Activated CD4-positive, alpha-beta T cell treated with anti-CD3 and anti-CD28 coated beads for 36 hours (primary cell): ENCODE measurements at regions of chr15 and their contacts with region 1.

Region 1: GRCh38 chr15:92077353-92078085 is 224.0 kb downstream of the SLCO3A1 start:
- DNase-seq: peak; percentile 86
- ATAC-seq: peak; percentile 87
- H3K4me3 Mint-ChIP-seq: no peak overlapping the region
- H3K27ac Mint-ChIP-seq: no peak overlapping the region
- H3K4me1 Mint-ChIP-seq: peaks cover 23% of the 10 kb centered on the region
- H3K27me3 Mint-ChIP-seq: no peaks in the 10 kb centered on the region

Region 2: DNA sequence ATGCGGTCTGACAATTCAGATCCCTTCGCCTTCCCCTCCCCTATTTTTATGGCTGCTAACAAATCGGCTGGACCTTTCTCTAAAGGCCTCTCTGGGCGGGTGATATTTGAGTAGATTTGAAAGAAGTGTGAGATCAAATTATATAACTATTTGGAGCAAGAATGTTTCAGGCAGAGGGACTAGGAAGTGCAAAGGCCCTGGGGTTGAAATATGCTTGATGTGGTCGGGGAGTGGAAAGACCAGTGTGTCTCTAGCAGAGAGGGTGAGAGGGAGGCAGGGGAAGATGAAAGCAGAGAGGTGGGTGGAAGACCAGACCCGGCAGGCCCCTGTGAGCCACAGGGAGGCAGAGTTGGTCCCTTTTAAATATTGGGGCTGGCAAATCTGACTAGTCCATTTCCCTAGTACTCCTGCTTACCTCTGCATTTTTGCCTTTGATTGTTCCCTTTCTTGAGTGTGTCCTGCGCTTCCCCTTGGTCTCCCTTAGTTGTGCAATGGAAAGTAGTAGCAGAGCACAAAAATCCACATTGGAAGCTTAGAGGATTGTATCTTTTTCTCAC is 191.7 kb before region 1 on chr15:
- CTCF ChIA-PET with region 1: interaction called, 6 read pairs
- POLR2A ChIA-PET with region 1: no interaction called
- intact Hi-C with region 1: loop called in 1 of 2 experiments (anchors 1 kb)
- DNase-seq: peak; percentile 19
- ATAC-seq: no peak
- H3K4me3 Mint-ChIP-seq: no peak overlapping the region
- H3K27ac Mint-ChIP-seq: no peak overlapping the region
- H3K4me1 Mint-ChIP-seq: peaks cover 20% of the 10 kb centered on the region
- H3K27me3 Mint-ChIP-seq: no peaks in the 10 kb centered on the region

Region 3: DNA sequence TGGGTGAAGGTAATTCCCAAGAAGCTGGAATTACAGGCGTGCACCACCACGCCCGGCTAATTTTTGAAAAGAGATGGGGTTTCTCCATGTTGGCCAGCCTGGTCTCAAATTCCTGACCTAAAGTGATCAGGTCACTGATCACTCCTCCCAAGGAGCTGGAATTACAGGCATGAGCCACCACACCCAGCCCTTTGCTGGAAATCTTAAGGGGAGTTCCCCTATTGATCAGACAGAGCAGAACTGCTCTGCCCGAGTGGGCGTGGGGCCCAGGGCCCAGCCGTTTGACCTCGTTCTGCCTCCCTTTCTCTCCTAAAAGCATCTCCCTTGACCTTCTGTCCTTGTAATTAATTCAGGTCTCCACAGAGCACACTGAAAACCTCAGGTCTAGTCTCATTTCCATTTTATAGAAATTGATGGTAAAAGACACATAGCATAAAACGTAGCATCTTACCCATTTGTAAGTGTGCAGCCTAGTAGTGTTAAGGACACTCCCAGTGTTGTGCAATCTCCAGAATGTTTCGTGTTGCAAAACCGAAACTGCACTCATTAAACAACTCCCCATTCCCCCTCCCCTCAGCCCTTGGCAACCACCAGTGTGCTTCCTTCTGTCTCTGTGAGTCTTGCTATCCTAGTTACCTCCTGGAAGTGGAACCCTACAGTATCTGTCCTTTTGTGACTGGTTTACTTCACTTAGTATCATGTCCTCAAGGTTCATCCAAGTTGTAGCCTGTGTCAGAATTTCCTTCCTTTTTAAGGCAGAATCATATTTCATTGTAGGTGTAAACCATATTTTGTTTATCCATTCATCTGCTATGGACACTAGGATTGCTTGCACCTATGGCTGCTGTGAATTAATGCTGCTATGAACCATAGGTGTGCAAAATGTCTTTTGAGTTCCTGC is 134.6 kb before region 1 on chr15:
- CTCF ChIA-PET with region 1: interaction called, 3 read pairs
- POLR2A ChIA-PET with region 1: no interaction called
- intact Hi-C with region 1: loop called in 1 of 2 experiments (anchors 5 kb)
- DNase-seq: peak; percentile 63
- ATAC-seq: peak; percentile 65
- H3K4me3 Mint-ChIP-seq: no peak overlapping the region
- H3K27ac Mint-ChIP-seq: peak overlapping the region; percentile 32
- H3K4me1 Mint-ChIP-seq: peaks cover 48% of the 10 kb centered on the region
- H3K27me3 Mint-ChIP-seq: no peaks in the 10 kb centered on the region